T-cell (primary cell): ENCODE measurements at regions of chr2 and their contacts with region 1.

Region 1: DNA sequence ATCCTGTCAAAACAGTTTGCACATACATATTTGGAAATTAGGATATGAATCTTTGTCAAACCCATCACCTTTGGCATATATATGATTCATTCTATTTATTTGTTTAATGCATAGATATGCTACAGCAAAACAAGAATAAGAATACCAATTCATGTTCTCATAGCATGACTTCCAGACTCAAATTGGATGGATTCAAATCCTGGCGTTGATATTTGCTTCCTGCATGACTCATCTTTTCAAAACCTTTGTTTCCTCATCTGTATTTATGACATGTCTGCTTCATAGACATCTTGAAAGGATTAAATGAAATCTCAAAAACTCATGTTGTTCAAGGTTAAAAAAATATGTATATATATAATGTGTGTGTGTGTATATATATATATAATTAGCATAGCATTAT is 261.3 kb downstream of the MBD5 start:
- DNase-seq: no peak
- ATAC-seq: no peak
- H3K4me3 ChIP-seq: no peak overlapping the region
- H3K4me3 Mint-ChIP-seq: no peak overlapping the region
- H3K27ac ChIP-seq: no peak overlapping the region
- H3K27ac Mint-ChIP-seq: no peak overlapping the region
- H3K4me1 ChIP-seq: no peaks in the 10 kb centered on the region
- H3K4me1 Mint-ChIP-seq: peaks cover 0 to 4% (median 2%) of the 10 kb centered on the region in 3 donors
- H3K27me3 ChIP-seq: no peaks in the 10 kb centered on the region
- H3K27me3 Mint-ChIP-seq: no peaks in the 10 kb centered on the region

Region 2: GRCh38 chr2:147739508-147739907 is 542.7 kb before region 1 on chr2:
- CTCF ChIA-PET with region 1: no interaction called
- POLR2A ChIA-PET with region 1: no interaction called
- DNase-seq: no peak
- ATAC-seq: no peak
- H3K4me3 ChIP-seq: no peak overlapping the region
- H3K4me3 Mint-ChIP-seq: no peak overlapping the region
- H3K27ac ChIP-seq: no peak overlapping the region
- H3K27ac Mint-ChIP-seq: no peak overlapping the region
- H3K4me1 ChIP-seq: no peaks in the 10 kb centered on the region
- H3K4me1 Mint-ChIP-seq: no peaks in the 10 kb centered on the region
- H3K27me3 ChIP-seq: no peaks in the 10 kb centered on the region
- H3K27me3 Mint-ChIP-seq: no peaks in the 10 kb centered on the region

Region 3: GRCh38 chr2:148172131-148172753 is 110.0 kb before region 1 on chr2:
- CTCF ChIA-PET with region 1: no interaction called
- POLR2A ChIA-PET with region 1: interaction called in 1 of 2 experiments, 13 read pairs
- DNase-seq: no peak
- ATAC-seq: no peak
- H3K4me3 ChIP-seq: no peak overlapping the region
- H3K4me3 Mint-ChIP-seq: no peak overlapping the region
- H3K27ac ChIP-seq: no peak overlapping the region
- H3K27ac Mint-ChIP-seq: no peak overlapping the region
- H3K4me1 ChIP-seq: no peaks in the 10 kb centered on the region
- H3K4me1 Mint-ChIP-seq: peaks cover 0 to 6% (median 2%) of the 10 kb centered on the region in 3 donors
- H3K27me3 ChIP-seq: no peaks in the 10 kb centered on the region
- H3K27me3 Mint-ChIP-seq: no peaks in the 10 kb centered on the region

Region 4: DNA sequence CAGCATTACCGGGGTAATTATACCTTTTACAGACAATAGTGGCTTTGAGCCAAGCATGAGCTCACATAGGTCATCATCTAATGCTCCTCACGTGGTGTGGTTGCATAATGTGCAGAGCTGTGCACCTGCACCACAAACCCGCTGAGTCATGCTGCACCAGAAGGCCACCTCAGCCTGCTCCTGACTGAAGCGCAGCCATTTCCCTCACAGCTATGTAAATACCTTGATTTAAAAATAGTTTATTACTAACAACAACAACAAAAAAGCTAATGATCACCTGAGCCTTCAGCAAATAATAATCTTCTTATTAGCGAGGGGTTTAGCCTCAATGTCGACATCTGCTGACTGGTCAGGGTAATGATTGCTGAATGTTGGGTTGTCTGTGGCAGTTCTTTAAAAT is 22.5 kb before region 1 on chr2:
- CTCF ChIA-PET with region 1: no interaction called
- POLR2A ChIA-PET with region 1: no interaction called
- DNase-seq: no peak
- ATAC-seq: no peak
- H3K4me3 ChIP-seq: no peak overlapping the region
- H3K4me3 Mint-ChIP-seq: no peak overlapping the region
- H3K27ac ChIP-seq: no peak overlapping the region
- H3K27ac Mint-ChIP-seq: no peak overlapping the region
- H3K4me1 ChIP-seq: no peaks in the 10 kb centered on the region
- H3K4me1 Mint-ChIP-seq: peaks cover 0 to 8% (median 2%) of the 10 kb centered on the region in 3 donors
- H3K27me3 ChIP-seq: no peaks in the 10 kb centered on the region
- H3K27me3 Mint-ChIP-seq: no peaks in the 10 kb centered on the region

Region 5: GRCh38 chr2:148298196-148298595 is 16.0 kb after region 1 on chr2:
- CTCF ChIA-PET with region 1: no interaction called
- POLR2A ChIA-PET with region 1: interaction called in 1 of 2 experiments, 12 read pairs
- DNase-seq: no peak
- ATAC-seq: no peak
- H3K4me3 ChIP-seq: no peak overlapping the region
- H3K4me3 Mint-ChIP-seq: no peak overlapping the region
- H3K27ac ChIP-seq: no peak overlapping the region
- H3K27ac Mint-ChIP-seq: no peak overlapping the region
- H3K4me1 ChIP-seq: no peaks in the 10 kb centered on the region
- H3K4me1 Mint-ChIP-seq: no peaks in the 10 kb centered on the region
- H3K27me3 ChIP-seq: no peaks in the 10 kb centered on the region
- H3K27me3 Mint-ChIP-seq: no peaks in the 10 kb centered on the region